A549 (cell line): ENCODE measurements at regions of chr3 and their contacts with region 1.

Region 1: GRCh38 chr3:123723522-123724168 is 138.8 kb upstream of the HACD2 start:
- DNase-seq: peak; percentile 78 to 84
- ATAC-seq: peak; percentile 79 to 80
- H3K4me3 ChIP-seq: no peak overlapping the region
- H3K27ac ChIP-seq: peak overlapping the region; percentile 56 to 72; a peak in 4 of 6 replicates
- H3K4me1 ChIP-seq: peaks cover 22% of the 10 kb centered on the region
- CTCF ChIP-seq: peak; percentile 74
- EP300 ChIP-seq: no peak
- POLR2A ChIP-seq: no peak
- RAD21 ChIP-seq: peak; percentile 71 to 73

Region 2: DNA sequence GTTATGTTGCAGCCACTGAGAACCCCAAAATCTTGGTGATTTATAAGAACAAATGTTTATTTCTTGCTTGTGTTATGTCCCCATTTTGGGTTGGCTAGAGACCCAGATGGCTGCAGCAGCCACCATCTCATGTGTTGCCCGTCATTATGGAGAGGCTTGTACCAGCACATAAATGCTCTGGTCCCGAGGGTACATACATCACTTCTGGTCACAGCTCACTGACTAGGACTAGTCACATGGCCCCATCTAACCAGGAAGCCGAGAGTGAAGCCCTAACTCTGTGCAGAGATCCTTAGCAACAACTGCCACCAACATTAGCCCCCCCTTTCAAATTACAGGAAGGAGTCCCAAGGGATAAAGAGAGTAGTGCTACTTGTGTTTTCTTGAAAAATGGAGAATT is 113.3 kb before region 1 on chr3:
- CTCF ChIA-PET with region 1: no interaction called
- POLR2A ChIA-PET with region 1: no interaction called
- DNase-seq: no peak
- ATAC-seq: no peak
- H3K4me3 ChIP-seq: no peak overlapping the region
- H3K27ac ChIP-seq: no peak overlapping the region
- H3K4me1 ChIP-seq: peaks cover 18% of the 10 kb centered on the region
- CTCF ChIP-seq: no peak
- EP300 ChIP-seq: no peak
- POLR2A ChIP-seq: no peak
- RAD21 ChIP-seq: no peak

Region 3: GRCh38 chr3:123642182-123642956 is 81.3 kb before region 1 on chr3:
- CTCF ChIA-PET with region 1: interaction called, 829 read pairs
- POLR2A ChIA-PET with region 1: no interaction called
- DNase-seq: peak; percentile 79 to 92
- ATAC-seq: peak; percentile 93 to 99
- H3K4me3 ChIP-seq: no peak overlapping the region
- H3K27ac ChIP-seq: no peak overlapping the region
- H3K4me1 ChIP-seq: no peaks in the 10 kb centered on the region
- CTCF ChIP-seq: peak; percentile 85
- EP300 ChIP-seq: no peak
- POLR2A ChIP-seq: no peak
- RAD21 ChIP-seq: peak; percentile 68 to 75

Region 4: GRCh38 chr3:123706871-123707270 is 16.8 kb before region 1 on chr3:
- CTCF ChIA-PET with region 1: interaction called, 43 read pairs
- POLR2A ChIA-PET with region 1: no interaction called
- DNase-seq: no peak
- ATAC-seq: no peak
- H3K4me3 ChIP-seq: no peak overlapping the region
- H3K27ac ChIP-seq: no peak overlapping the region
- H3K4me1 ChIP-seq: no peaks in the 10 kb centered on the region
- CTCF ChIP-seq: no peak
- EP300 ChIP-seq: no peak
- POLR2A ChIP-seq: no peak
- RAD21 ChIP-seq: no peak

Region 5: DNA sequence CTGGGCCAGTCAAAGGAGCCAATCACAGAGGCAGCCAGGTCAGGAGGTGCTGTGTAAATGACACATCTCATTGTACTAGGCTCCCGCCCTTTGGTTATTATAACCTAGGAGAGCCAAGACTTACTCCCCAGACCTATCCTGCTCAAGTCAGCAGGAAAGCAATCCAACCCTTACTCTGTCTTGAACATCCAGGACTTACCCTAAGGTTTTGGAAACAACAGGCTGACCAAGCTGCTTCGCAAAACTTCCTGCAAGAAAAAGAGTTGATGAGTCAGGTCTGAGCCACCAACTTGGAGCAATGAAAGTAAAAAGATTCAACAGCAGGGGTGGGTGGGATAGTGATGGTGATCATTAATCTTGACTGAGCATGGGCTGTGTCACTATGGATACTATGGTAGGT is 16.1 kb after region 1 on chr3:
- CTCF ChIA-PET with region 1: interaction called, 100 read pairs
- POLR2A ChIA-PET with region 1: no interaction called
- DNase-seq: no peak
- ATAC-seq: peak; percentile 16 to 60; a peak in 3 of 6 replicates
- H3K4me3 ChIP-seq: no peak overlapping the region
- H3K27ac ChIP-seq: peak overlapping the region; percentile 32 to 73; a peak in 4 of 6 replicates
- H3K4me1 ChIP-seq: peaks cover 34% of the 10 kb centered on the region
- CTCF ChIP-seq: no peak
- EP300 ChIP-seq: no peak
- POLR2A ChIP-seq: no peak
- RAD21 ChIP-seq: no peak

Region 6: DNA sequence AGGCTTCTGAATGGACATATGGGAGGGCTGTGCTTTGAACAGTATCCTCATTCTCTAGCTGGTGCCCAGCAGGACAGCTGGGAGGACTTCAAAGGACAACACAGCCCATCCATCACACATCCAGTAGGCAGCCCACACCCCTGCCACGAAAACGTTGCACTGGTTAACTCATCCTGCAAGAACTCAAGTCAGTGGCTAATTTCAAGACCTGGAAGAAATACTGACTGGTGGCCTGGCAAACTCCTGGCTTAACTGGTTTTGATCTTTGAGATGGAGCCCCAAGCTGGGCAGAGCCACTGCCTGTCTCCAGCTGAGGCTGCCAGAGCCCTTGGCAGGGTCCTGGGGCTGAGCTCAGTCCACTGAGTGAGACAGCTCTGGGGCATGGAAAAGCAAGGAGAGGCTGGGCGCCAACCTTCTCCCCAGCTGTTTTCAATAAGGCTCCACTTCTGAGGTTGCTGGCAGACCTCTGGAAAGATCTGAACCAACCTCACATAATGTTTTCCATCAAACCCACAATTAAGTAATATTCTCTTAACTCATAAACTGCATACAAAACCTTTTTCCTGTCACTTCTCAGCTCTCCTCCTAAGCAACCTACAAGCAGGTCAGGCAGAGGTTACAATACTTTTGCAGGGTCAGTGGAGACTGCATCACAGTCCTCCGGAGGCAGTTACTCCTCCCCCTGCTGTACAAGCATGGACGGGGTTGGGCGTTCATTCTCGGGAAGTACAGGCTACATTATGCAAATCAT is 50.2 kb after region 1 on chr3:
- CTCF ChIA-PET with region 1: interaction called, 23 read pairs
- POLR2A ChIA-PET with region 1: no interaction called
- DNase-seq: no peak
- ATAC-seq: peak in 1 of 2 experiments; percentile 44; a peak in 3 of 6 replicates
- H3K4me3 ChIP-seq: no peak overlapping the region
- H3K27ac ChIP-seq: peak overlapping the region in 1 of 2 experiments; percentile 21; a peak in 1 of 6 replicates
- H3K4me1 ChIP-seq: peaks cover 17% of the 10 kb centered on the region; the same call in 2 of the 3 replicates
- CTCF ChIP-seq: no peak
- EP300 ChIP-seq: no peak
- POLR2A ChIP-seq: no peak
- RAD21 ChIP-seq: no peak